A673 (cell line): ENCODE measurements at regions of chr7 and their contacts with region 1.

Region 1: DNA sequence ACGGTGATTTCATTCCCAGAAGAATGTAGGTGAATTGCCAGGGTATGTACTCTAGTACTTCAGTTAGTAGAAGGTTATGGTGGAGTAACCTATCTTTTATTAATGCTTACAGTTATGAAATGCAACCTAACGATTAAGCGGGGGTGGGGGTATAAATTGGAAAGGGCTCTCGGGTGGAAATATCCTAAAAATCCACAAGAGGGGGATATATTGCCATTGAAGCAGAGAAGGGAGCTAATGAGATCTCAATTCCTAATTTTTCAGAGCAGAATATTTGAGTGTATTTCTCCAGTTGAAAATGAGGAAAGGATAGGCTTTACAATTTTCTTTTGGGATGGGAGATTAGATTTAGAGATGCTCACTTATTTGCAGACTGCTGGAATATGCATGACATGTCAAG is 90.8 kb downstream of the DNAJB9 start:
- DNase-seq: peak; percentile 71
- H3K4me3 ChIP-seq: no peak overlapping the region
- H3K27ac ChIP-seq: no peak overlapping the region
- H3K4me1 ChIP-seq: peaks cover 45% of the 10 kb centered on the region
- H3K27me3 ChIP-seq: no peaks in the 10 kb centered on the region
- CTCF ChIP-seq: peak; percentile 73

Region 2: GRCh38 chr7:108697254-108697653 is 36.8 kb after region 1 on chr7:
- CTCF ChIA-PET with region 1: no interaction called
- POLR2A ChIA-PET with region 1: no interaction called
- intact Hi-C with region 1: loop called (anchors 1 kb)
- DNase-seq: no peak
- H3K4me3 ChIP-seq: no peak overlapping the region
- H3K27ac ChIP-seq: no peak overlapping the region
- H3K4me1 ChIP-seq: no peaks in the 10 kb centered on the region
- H3K27me3 ChIP-seq: no peaks in the 10 kb centered on the region
- CTCF ChIP-seq: no peak

Region 3: GRCh38 chr7:108770981-108771745 is 110.7 kb after region 1 on chr7:
- CTCF ChIA-PET with region 1: interaction called, 4 read pairs
- POLR2A ChIA-PET with region 1: interaction called, 4 read pairs
- intact Hi-C with region 1: loop called (anchors 2 kb)
- DNase-seq: peak; percentile 95
- H3K4me3 ChIP-seq: no peak overlapping the region
- H3K27ac ChIP-seq: peak overlapping the region; percentile 95
- H3K4me1 ChIP-seq: peaks cover 52% of the 10 kb centered on the region
- H3K27me3 ChIP-seq: no peaks in the 10 kb centered on the region
- CTCF ChIP-seq: no peak

Region 4: DNA sequence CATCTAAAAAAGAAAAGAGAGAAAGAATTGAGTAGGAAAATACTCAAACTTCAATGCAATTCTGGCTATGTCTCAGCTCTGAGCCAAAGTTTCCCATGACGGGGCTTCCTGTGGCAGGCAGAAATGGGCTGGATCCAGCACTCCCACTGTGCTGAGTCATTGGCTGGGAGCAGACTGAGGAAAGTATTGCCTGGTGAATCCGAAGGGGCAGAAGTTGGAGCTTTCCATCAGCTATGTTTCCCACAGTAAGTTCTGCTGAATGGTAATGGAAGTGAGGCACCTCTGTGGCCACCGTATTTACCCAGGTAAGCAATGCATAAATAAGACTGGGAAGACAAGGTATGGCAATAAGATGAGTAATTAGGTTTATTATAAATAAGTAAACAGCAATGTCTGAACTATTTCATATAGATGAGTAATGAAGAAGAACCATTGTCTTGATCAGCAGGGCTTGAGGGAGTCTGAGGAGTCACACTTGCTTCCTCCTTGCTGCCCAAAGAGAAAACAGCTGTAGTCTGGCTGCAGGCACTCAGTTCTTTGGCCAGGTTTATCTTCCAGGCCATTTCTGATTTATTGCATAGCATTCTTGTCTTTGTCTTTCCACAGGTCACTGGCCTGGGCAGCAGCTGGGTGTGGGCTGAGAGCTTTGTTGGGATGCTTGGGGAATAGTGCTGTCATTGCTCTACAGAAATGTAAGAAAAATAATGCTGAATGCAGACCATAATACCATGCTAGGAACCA is 164.6 kb after region 1 on chr7:
- CTCF ChIA-PET with region 1: interaction called, 13 read pairs
- POLR2A ChIA-PET with region 1: no interaction called
- intact Hi-C with region 1: no loop called
- DNase-seq: peak; percentile 91
- H3K4me3 ChIP-seq: peak overlapping the region; percentile 34
- H3K27ac ChIP-seq: peak overlapping the region; percentile 67
- H3K4me1 ChIP-seq: peaks cover 23% of the 10 kb centered on the region
- H3K27me3 ChIP-seq: no peaks in the 10 kb centered on the region
- CTCF ChIP-seq: no peak

Region 5: DNA sequence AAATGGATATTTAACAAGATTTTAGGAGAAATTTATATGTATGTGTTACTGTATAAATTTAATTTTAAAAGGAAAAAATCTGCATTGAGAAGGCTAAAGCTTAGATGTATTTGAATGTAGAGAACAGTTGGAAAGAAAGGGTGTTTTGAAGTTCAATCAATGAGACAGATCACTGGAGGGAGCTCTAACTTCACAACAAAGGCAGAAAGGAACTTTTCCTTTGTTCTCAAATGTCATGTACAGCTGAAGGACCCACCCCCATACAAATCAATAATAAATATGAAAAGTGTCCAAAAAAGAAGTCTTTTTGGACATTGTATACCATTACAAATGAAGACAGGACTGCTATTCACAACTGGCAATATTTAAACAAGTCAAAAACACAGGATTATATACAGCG is 312.6 kb after region 1 on chr7:
- CTCF ChIA-PET with region 1: no interaction called
- POLR2A ChIA-PET with region 1: no interaction called
- intact Hi-C with region 1: loop called (anchors 5 kb)
- DNase-seq: peak; percentile 49
- H3K4me3 ChIP-seq: no peak overlapping the region
- H3K27ac ChIP-seq: no peak overlapping the region
- H3K4me1 ChIP-seq: peaks cover 6% of the 10 kb centered on the region
- H3K27me3 ChIP-seq: no peaks in the 10 kb centered on the region
- CTCF ChIP-seq: peak; percentile 62

Region 6: GRCh38 chr7:109158246-109158645 is 497.8 kb after region 1 on chr7:
- CTCF ChIA-PET with region 1: no interaction called
- POLR2A ChIA-PET with region 1: no interaction called
- intact Hi-C with region 1: loop called (anchors 10 kb)
- DNase-seq: no peak
- H3K4me3 ChIP-seq: no peak overlapping the region
- H3K27ac ChIP-seq: no peak overlapping the region
- H3K4me1 ChIP-seq: no peaks in the 10 kb centered on the region
- H3K27me3 ChIP-seq: no peaks in the 10 kb centered on the region
- CTCF ChIP-seq: no peak